CD8-positive, alpha-beta T cell (primary cell): ENCODE measurements at regions of chr10 and their contacts with region 1.

Region 1: DNA sequence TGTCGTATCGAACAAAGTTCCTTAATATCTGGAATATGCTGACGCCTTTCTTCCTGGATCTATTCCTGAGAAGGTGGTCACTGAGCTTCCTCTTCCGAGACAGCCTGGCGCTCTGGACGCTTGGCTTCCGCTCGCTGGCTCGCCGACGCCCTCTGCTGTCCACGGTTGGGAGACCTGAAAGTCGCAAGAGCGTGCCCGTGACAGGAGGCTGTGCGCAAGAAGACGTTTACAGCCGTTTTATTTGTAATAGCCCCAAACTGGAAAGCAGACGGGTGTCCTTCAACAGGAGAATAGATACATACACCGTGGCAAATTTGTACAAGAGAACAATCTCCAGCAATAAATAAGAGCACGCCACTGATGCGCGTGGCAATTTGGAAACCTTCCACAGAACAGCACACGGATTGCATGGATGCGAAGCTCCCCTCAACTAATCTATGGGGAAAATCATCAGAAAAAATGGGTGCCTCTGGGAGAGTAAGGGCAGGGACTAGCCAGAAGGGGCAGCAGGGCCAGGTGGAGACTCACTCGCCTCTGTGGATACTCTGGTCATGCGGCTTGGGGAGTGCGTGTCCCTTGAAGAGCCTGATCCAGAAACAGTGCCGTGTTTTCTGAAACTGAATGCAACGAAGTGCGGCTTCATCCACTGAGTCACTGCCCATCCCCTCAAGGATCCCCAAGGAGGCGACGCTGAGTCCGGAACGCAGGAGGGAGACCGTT is 41.5 kb upstream of the BNIP3 start:
- DNase-seq: peak; percentile 54 to 88 (median 77)
- ATAC-seq: peak; percentile 94
- H3K4me3 ChIP-seq: no peak overlapping the region
- H3K4me3 Mint-ChIP-seq: peak overlapping the region; percentile 8
- H3K27ac ChIP-seq: no peak overlapping the region
- H3K27ac Mint-ChIP-seq: no peak overlapping the region
- H3K4me1 ChIP-seq: peaks cover 6% of the 10 kb centered on the region
- H3K4me1 Mint-ChIP-seq: peaks cover 7% of the 10 kb centered on the region
- H3K27me3 ChIP-seq: peaks cover 0 to 6% of the 10 kb centered on the region in 2 experiments
- H3K27me3 Mint-ChIP-seq: peaks cover 30% of the 10 kb centered on the region
- CTCF ChIP-seq: peak; percentile 91

Region 2: DNA sequence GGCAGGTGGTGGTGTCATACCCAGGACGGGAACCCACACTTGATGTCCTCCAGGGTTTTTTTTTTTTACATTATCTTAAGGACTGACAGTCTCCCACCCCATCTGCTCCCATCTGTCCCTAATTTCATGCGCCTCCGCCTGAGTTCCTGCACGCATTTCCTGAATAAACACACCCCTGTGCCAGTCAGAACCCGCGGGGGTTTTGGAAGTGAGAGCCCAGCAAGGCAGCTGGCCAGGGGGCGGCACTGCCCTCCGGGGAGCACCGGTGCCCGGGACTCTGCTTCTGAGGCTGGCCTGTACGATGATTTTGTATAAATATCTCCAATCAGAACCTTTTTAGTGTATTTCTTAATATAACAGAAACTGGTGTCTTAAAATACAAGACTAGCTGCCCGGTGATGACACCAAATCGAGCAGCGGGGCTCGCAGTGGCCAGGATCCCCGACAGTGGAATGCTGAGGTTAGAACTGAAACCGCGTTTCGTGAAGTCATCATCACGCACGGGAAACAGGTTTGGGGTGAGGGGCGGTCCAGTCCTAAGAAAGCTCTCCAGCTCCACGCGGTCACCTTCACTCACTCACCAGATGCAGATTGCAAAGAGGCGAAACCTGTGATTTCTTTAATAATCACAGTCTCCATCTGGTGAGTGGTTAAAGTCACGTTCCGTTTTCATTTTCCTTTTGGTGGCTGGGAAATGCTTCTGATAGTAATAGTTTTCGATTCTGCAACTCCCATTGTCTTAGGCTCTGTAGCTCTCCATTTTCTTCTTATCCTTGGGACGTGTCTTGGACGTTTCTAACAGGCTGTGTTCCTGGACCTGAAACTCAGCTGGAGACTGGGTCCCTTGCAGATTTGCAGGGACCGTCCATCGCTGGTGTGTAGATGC is 61.2 kb before region 1 on chr10:
- CTCF ChIA-PET with region 1: interaction called, 11 read pairs
- POLR2A ChIA-PET with region 1: no interaction called
- intact Hi-C with region 1: no loop called
- DNase-seq: no peak
- ATAC-seq: no peak
- H3K4me3 ChIP-seq: no peak overlapping the region
- H3K4me3 Mint-ChIP-seq: no peak overlapping the region
- H3K27ac ChIP-seq: no peak overlapping the region
- H3K27ac Mint-ChIP-seq: no peak overlapping the region
- H3K4me1 ChIP-seq: peaks cover 18% of the 10 kb centered on the region
- H3K4me1 Mint-ChIP-seq: peaks cover 23% of the 10 kb centered on the region
- H3K27me3 ChIP-seq: no peaks in the 10 kb centered on the region
- H3K27me3 Mint-ChIP-seq: no peaks in the 10 kb centered on the region
- CTCF ChIP-seq: no peak

Region 3: GRCh38 chr10:131972474-131973071 is 50.7 kb before region 1 on chr10:
- CTCF ChIA-PET with region 1: interaction called, 19 read pairs
- POLR2A ChIA-PET with region 1: no interaction called
- intact Hi-C with region 1: no loop called
- DNase-seq: peak in 6 of 9 experiments; percentile 15 to 72 (median 50)
- ATAC-seq: peak; percentile 62
- H3K4me3 ChIP-seq: peak overlapping the region; percentile 38 to 52
- H3K4me3 Mint-ChIP-seq: peak overlapping the region; percentile 79
- H3K27ac ChIP-seq: peak overlapping the region; percentile 34 to 68
- H3K27ac Mint-ChIP-seq: peak overlapping the region; percentile 94
- H3K4me1 ChIP-seq: peaks cover 67% of the 10 kb centered on the region
- H3K4me1 Mint-ChIP-seq: peaks cover 69% of the 10 kb centered on the region
- H3K27me3 ChIP-seq: no peaks in the 10 kb centered on the region
- H3K27me3 Mint-ChIP-seq: no peaks in the 10 kb centered on the region
- CTCF ChIP-seq: no peak

Region 4: GRCh38 chr10:131997366-131998049 is 25.7 kb before region 1 on chr10:
- CTCF ChIA-PET with region 1: interaction called, 13 read pairs
- POLR2A ChIA-PET with region 1: no interaction called
- intact Hi-C with region 1: no loop called
- DNase-seq: no peak
- ATAC-seq: no peak
- H3K4me3 ChIP-seq: no peak overlapping the region
- H3K4me3 Mint-ChIP-seq: no peak overlapping the region
- H3K27ac ChIP-seq: no peak overlapping the region
- H3K27ac Mint-ChIP-seq: no peak overlapping the region
- H3K4me1 ChIP-seq: no peaks in the 10 kb centered on the region
- H3K4me1 Mint-ChIP-seq: no peaks in the 10 kb centered on the region
- H3K27me3 ChIP-seq: no peaks in the 10 kb centered on the region
- H3K27me3 Mint-ChIP-seq: no peaks in the 10 kb centered on the region
- CTCF ChIP-seq: no peak

Region 5: DNA sequence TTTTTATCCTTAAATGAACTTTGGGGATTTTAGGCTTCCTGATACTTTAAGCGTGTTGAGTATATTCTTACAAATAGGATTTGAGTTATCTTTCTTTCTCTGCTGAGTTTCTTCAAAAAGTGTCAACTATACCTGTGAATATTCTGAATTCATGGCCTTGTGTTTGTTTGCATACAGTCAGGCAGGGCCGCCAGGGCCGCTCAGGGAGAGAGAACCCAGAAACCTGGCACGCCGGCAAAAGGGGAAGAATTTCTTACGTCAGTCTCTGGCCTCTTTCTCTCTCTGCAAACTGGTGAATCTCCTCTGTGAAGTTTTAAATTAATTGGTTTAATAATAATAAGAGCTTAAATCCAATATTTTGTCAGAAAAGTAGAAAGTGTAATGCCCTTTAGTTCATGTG is 12.2 kb before region 1 on chr10:
- CTCF ChIA-PET with region 1: interaction called, 20 read pairs
- POLR2A ChIA-PET with region 1: no interaction called
- intact Hi-C with region 1: no loop called
- DNase-seq: no peak
- ATAC-seq: no peak
- H3K4me3 ChIP-seq: no peak overlapping the region
- H3K4me3 Mint-ChIP-seq: no peak overlapping the region
- H3K27ac ChIP-seq: no peak overlapping the region
- H3K27ac Mint-ChIP-seq: no peak overlapping the region
- H3K4me1 ChIP-seq: no peaks in the 10 kb centered on the region
- H3K4me1 Mint-ChIP-seq: peaks cover 2% of the 10 kb centered on the region
- H3K27me3 ChIP-seq: no peaks in the 10 kb centered on the region
- H3K27me3 Mint-ChIP-seq: peaks cover 7% of the 10 kb centered on the region
- CTCF ChIP-seq: no peak